ENCODE measurements at regions of chr12 and their contacts with region 1.

Region 1: DNA sequence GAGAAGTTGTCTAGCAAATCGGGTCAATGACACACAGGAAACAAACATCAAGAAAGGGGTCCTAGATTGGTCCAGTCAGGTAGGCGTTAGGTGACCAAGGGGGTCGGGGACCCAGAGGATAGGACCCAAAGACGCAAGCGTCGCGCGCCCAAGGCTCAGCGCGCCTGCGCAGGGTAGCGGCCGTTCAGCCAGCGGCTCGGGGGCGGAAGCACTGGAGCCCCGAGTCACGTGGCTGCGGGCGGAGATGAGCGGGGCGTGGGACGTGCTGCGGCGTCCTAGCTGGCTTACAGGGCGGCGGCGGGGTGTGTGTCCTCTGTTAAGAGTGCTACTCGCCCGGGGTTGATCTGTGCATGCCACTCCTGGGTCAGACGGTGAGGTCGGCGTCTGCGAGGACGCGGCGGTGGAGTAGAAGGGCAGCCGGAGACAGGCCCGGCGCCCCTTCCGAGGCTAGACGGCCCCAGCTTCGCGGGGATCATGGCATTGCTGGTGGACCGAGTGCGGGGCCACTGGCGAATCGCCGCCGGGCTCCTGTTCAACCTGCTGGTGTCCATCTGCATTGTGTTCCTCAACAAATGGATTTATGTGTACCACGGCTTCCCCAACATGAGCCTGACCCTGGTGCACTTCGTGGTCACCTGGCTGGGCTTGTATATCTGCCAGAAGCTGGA is at the start of gene SLC35E3:
- DNase-seq: peak; percentile 87 to 93 (median 88)
- H3K4me3 ChIP-seq: peak within 1 kb of the TSS; percentile 63
- H3K27ac ChIP-seq: peak within 1 kb of the TSS; percentile 22 to 65
- H3K4me1 ChIP-seq: peaks cover 1% of the 10 kb centered on the region
- H3K27me3 ChIP-seq: no peaks in the 10 kb centered on the region
- CTCF ChIP-seq: peak in 1 of 3 donors; percentile 10
- EP300 ChIP-seq: no peak
- POLR2A ChIP-seq: peak; percentile 47
- total RNA-seq, gene SLC35E3: 1.1 to 12.3 (median 8.1) TPM

Region 2: GRCh38 chr12:68012712-68013111 is 733.3 kb before region 1 on chr12:
- intact Hi-C with region 1: no loop called
- DNase-seq: no peak
- H3K4me3 ChIP-seq: no peak overlapping the region
- H3K27ac ChIP-seq: no peak overlapping the region
- H3K4me1 ChIP-seq: no peaks in the 10 kb centered on the region
- H3K27me3 ChIP-seq: no peaks in the 10 kb centered on the region
- CTCF ChIP-seq: no peak
- EP300 ChIP-seq: no peak
- POLR2A ChIP-seq: no peak

Region 3: DNA sequence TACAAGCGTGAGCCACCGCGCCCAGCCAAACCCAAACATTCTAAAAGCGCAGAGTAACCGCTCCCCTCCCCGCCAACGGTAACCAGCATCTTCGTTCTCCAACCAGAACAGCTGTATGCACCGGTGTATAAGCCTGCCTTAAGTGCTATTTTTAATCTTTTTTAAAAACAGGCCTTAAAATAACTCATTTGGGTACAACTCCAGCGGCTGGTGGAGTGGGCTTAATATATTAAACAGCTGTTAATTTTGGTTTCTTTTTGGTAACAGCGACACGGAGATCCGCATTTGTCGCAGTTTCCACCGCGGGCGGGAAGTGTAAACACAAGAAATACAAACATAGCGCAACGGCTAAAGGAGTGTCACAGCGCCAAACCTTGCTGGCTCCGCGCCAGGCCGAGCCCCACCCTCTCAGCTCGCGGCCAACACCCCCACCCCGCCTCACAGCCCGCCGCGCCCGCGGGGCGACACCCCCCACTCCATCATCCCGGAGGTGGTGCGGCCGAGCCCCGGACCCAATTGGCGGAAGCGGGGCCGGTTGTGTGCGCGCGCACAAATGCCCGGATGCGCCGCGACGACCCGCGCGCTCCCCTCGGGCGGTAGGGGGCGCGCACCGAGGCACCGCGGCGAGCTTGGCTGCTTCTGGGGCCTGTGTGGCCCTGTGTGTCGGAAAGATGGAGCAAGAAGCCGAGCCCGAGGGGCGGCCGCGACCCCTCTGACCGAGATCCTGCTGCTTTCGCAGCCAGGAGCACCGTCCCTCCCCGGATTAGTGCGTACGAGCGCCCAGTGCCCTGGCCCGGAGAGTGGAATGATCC is 61.7 kb after region 1 on chr12 and contains the start of gene MDM2:
- intact Hi-C with region 1: loop called in 1 of 4 experiments (anchors 10 kb)
- DNase-seq: peak; percentile 92 to 96 (median 94)
- H3K4me3 ChIP-seq: peak within 1 kb of the TSS; percentile 87
- H3K27ac ChIP-seq: peak within 1 kb of the TSS; percentile 83
- H3K4me1 ChIP-seq: peaks cover 3% of the 10 kb centered on the region
- H3K27me3 ChIP-seq: no peaks in the 10 kb centered on the region
- CTCF ChIP-seq: peak; percentile 86 to 95 (median 90)
- EP300 ChIP-seq: no peak
- POLR2A ChIP-seq: peak; percentile 87
- total RNA-seq, gene MDM2: 56.3 to 101 (median 83.8) TPM

Region 4: GRCh38 chr12:69464428-69464827 is 718.4 kb after region 1 on chr12:
- intact Hi-C with region 1: no loop called
- DNase-seq: no peak
- H3K4me3 ChIP-seq: no peak overlapping the region
- H3K27ac ChIP-seq: no peak overlapping the region
- H3K4me1 ChIP-seq: no peaks in the 10 kb centered on the region
- H3K27me3 ChIP-seq: no peaks in the 10 kb centered on the region
- CTCF ChIP-seq: no peak
- EP300 ChIP-seq: no peak
- POLR2A ChIP-seq: no peak